ENCODE measurements at regions of chr17 and their contacts with region 1.

Region 1: GRCh38 chr17:4891411-4892342 is 7.7 kb upstream of the C17orf107 start:
- DNase-seq: no peak
- H3K4me3 ChIP-seq: no peak overlapping the region
- H3K27ac ChIP-seq: no peak overlapping the region
- H3K4me1 ChIP-seq: no peaks in the 10 kb centered on the region
- H3K27me3 ChIP-seq: no peaks in the 10 kb centered on the region
- CTCF ChIP-seq: no peak

Region 2: DNA sequence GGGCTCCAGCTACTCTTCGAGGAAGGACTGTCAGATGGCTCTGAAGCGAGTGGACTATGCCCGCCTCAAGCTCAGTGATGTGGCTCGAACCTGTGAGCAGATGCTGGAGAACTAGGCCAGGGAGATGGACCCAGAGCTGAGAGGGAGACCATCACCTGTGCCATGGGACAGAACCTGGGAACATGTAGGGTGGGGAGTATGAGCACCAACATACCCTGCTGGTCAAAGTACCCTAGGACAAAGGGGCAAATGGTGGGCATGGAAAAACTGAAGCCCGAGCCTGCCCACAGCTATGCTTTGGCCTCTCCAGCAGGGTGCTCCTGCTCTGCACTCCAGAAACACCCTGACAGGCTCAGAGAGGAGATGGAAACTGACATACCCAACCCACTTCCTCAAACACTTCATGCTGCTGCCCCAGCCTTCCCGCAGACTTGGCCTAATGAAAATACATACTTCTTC is 158.6 kb before region 1 on chr17:
- intact Hi-C with region 1: loop called (anchors 5 kb)
- DNase-seq: no peak
- H3K4me3 ChIP-seq: no peak overlapping the region
- H3K27ac ChIP-seq: peak overlapping the region; percentile 6
- H3K4me1 ChIP-seq: peaks cover 3% of the 10 kb centered on the region
- H3K27me3 ChIP-seq: no peaks in the 10 kb centered on the region
- CTCF ChIP-seq: no peak

Region 3: DNA sequence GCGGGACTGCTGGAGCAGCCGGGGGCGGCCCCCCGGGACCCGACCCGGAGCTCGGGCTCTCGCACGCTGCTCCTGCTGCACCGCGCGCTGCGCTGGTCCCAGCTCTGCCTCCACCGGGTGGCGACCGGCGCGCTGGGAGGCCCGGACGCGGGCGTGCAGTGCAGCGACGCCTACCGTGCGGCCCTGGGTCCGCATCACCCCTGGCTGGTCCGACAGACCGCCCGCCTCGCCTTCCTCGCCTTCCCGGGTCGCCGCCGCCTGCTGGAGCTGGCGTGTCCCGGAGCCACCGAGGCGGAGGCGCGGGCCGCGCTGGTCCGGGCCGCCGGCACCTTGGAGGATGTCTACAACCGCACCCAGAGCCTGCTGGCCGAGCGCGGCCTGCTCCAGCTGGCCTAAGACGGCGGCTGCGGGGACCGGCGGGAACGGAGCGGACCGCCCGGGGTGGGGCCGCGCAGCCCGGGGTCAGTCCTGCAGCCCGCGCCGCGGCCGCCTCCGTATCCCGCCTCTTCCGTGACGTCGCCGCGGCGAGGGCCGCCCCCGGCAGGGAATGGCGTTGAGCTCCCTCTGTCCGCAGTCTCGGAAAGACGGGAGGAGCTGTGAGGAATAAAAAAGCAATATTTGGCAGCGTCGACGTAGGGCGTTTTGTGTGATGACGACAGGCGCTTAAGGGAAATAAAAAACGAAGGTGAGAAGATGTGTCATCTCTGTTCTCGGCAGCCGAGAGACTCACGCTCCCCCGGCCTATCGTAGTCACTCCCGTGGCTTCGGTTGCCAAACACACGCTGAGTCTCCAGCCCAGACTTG is 101.6 kb before region 1 on chr17:
- intact Hi-C with region 1: loop called (anchors 2 kb)
- DNase-seq: peak; percentile 92
- H3K4me3 ChIP-seq: peak overlapping the region; percentile 58
- H3K27ac ChIP-seq: peak overlapping the region; percentile 94
- H3K4me1 ChIP-seq: no peaks in the 10 kb centered on the region
- H3K27me3 ChIP-seq: peaks cover 5% of the 10 kb centered on the region
- CTCF ChIP-seq: peak; percentile 74

Region 4: GRCh38 chr17:4956493-4957061 is 64.9 kb after region 1 on chr17:
- intact Hi-C with region 1: no loop called
- DNase-seq: no peak
- H3K4me3 ChIP-seq: no peak overlapping the region
- H3K27ac ChIP-seq: no peak overlapping the region
- H3K4me1 ChIP-seq: no peaks in the 10 kb centered on the region
- H3K27me3 ChIP-seq: no peaks in the 10 kb centered on the region
- CTCF ChIP-seq: no peak

Measured in colonic mucosa (tissue), 4 donors.